HEK293 (cell line): ENCODE measurements at regions of chr1 and their contacts with region 1.

Region 1: GRCh38 chr1:52552505-52553361 is at the start of gene TUT4:
- H3K4me3 ChIP-seq: peak within 1 kb of the TSS; percentile 68
- H3K27ac ChIP-seq: peak within 1 kb of the TSS; percentile 96
- H3K4me1 ChIP-seq: peaks cover 18% of the 10 kb centered on the region
- CTCF ChIP-seq: peak; percentile 79

Region 2: GRCh38 chr1:52225174-52225573 is 327.6 kb before region 1 on chr1:
- CTCF ChIA-PET with region 1: no interaction called
- POLR2A ChIA-PET with region 1: no interaction called
- H3K4me3 ChIP-seq: no peak overlapping the region
- H3K27ac ChIP-seq: no peak overlapping the region
- H3K4me1 ChIP-seq: no peaks in the 10 kb centered on the region
- CTCF ChIP-seq: no peak

Region 3: DNA sequence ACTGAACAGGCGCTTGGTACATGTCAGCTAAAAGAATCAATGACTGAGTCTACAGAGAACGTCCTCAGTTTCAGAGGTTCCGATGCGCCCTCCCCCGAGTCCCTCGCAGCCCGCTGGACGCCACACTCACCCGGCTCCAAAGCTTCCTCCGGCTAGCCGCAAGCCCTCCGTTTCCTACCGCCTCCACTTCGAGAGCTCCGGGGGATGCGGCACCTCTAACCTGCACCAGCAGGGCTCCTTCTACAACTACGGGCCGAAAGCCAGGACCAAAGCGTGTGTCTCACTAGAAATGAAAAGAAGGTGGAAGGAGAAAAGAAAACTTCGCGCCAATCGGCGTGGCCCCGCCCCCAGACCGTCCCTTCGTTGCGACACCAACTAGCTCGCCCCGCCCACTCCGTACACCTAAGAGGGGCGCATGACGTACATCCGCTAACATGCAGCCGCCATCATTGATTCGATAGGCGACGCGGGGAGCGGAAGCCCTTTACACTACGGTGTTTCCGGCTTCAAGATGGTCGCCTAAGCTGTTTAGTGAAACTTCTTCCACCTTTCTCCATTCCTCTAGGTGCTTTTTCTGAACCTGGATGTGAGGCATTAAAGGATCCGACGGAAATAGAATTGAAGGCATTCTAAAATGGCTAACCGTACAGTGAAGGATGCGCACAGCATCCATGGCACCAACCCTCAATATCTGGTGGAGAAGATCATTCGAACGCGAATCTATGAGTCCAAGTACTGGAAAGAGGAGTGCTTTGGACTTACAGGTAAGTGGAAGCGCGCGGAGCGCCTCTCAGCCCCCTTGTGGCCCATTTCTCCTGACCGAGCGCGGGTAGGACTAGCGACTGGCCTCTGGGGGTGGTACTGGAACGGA is 148.4 kb before region 1 on chr1 and contains the starts of genes ORC1 and PRPF38A:
- CTCF ChIA-PET with region 1: interaction called, 3 read pairs
- POLR2A ChIA-PET with region 1: interaction called, 22 read pairs
- H3K4me3 ChIP-seq: peak within 1 kb of the TSS; percentile 83
- H3K27ac ChIP-seq: peak within 1 kb of the TSS; percentile 68
- H3K4me1 ChIP-seq: no peaks in the 10 kb centered on the region
- CTCF ChIP-seq: peak; percentile 94

Region 4: DNA sequence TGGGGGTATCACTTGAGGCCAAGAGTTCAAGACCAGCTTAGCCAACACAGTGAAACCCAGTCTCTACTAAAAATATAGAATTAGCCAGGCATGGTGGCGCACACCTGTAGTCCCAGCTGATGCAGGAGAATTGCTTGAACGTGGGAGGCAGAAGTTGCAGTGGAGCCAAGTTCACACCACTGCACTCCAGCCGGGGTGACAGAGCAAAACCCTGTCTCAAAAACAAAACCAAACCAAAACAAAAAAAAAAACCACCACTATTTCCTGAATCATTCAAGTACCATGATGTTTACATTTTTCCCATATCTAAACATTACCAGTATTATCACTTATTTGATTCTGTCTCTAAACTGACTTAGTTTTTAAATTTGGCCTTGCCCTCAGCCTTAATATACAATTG is 29.4 kb before region 1 on chr1:
- CTCF ChIA-PET with region 1: no interaction called
- POLR2A ChIA-PET with region 1: no interaction called
- H3K4me3 ChIP-seq: no peak overlapping the region
- H3K27ac ChIP-seq: no peak overlapping the region
- H3K4me1 ChIP-seq: no peaks in the 10 kb centered on the region
- CTCF ChIP-seq: no peak

Region 5: DNA sequence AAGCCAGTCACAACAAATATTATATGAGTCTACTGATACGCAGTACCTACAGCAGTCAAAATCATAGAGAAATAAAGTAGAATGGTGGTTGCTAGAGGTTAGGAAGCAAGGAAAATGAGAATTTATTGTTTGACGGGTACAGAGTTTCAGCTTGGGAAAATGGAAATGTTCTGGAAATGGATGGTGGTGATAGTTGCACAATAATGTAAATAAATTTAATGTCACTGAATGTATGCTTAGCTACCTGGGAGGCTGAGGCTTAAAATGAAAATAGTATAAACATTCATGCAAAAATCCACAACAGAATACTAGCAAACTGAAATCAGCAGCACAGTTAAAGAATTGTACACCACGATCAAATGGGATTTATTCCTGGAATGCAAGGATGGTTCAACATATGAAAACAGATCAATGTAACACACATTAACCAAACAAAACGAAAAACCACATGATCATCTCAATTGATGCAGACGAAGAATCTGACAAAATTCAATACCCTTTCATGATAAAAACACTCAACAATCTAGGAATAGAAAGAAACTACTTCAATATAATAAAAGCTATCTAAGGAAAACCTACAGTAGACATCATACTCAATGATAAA is 10.5 kb before region 1 on chr1:
- CTCF ChIA-PET with region 1: no interaction called
- POLR2A ChIA-PET with region 1: interaction called, 10 read pairs
- H3K4me3 ChIP-seq: no peak overlapping the region
- H3K27ac ChIP-seq: no peak overlapping the region
- H3K4me1 ChIP-seq: no peaks in the 10 kb centered on the region
- CTCF ChIP-seq: no peak

Region 6: GRCh38 chr1:52662645-52663313 is 110.0 kb after region 1 on chr1:
- CTCF ChIA-PET with region 1: interaction called, 4 read pairs
- POLR2A ChIA-PET with region 1: interaction called, 11 read pairs
- H3K4me3 ChIP-seq: no peak overlapping the region; the same call in 1 of the 2 replicates
- H3K27ac ChIP-seq: peak overlapping the region; percentile 38; the same call in 1 of the 2 replicates
- H3K4me1 ChIP-seq: peaks cover 2% of the 10 kb centered on the region; the same call in 1 of the 2 replicates
- CTCF ChIP-seq: no peak